SK-N-SH (cell line): ENCODE measurements at regions of chr10 and their contacts with region 1.

Region 1: DNA sequence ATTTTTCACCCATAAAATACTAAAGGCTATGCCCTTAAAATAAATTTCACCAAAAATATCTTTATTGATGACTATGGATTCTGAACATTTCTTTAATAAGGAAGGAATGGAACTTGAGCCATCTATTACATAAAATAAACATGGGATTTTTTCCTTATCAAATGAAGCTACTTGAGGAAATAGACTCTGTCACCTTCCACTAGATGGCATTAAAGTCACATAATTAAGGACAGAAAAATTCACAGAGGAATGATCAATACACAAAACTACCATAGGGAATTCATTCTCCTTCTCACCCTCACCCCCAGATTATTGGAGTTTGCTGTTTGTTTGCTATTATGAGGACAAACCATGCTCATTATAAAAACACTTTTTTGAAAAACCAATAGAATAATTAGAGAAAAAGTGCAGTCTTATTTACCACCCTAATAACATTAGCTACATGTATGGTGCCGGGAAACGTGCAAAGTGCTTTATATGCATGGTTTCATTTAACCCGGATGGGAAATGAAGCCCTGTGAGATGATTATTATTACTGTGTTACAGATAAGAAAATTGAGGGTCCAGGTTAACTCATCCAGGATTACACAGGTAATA is 21.1 kb upstream of the FOXI2 start:
- DNase-seq: peak; percentile 32
- H3K4me3 ChIP-seq: no peak overlapping the region; a peak in 1 of 4 replicates
- H3K27ac ChIP-seq: no peak overlapping the region
- H3K4me1 ChIP-seq: no peaks in the 10 kb centered on the region
- H3K27me3 ChIP-seq: no peaks in the 10 kb centered on the region
- CTCF ChIP-seq: peak; percentile 51
- EP300 ChIP-seq: no peak
- RAD21 ChIP-seq: peak; percentile 65

Region 2: DNA sequence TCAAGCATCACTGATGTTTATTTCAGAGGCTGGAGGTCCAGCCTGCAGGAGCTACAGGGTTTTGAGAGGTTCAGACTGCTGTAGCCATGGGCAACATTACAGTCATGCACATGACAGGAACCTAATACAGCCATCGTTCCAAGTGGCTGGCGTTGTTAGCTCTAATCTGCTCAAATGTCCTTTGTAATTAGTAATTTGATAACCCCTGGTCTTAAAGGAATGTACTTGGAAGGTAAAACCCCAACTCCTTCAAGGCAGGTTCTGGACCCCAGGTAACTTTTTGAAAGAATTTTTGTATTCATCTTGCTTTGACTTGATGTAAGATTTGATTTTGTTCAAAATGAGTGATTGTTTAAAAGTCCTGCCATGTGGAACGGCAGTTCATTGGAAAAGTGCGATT is 13.6 kb before region 1 on chr10:
- CTCF ChIA-PET with region 1: interaction called, 11 read pairs
- POLR2A ChIA-PET with region 1: no interaction called
- DNase-seq: no peak
- H3K4me3 ChIP-seq: no peak overlapping the region
- H3K27ac ChIP-seq: no peak overlapping the region
- H3K4me1 ChIP-seq: no peaks in the 10 kb centered on the region
- H3K27me3 ChIP-seq: no peaks in the 10 kb centered on the region
- CTCF ChIP-seq: no peak
- EP300 ChIP-seq: no peak
- RAD21 ChIP-seq: no peak

Region 3: GRCh38 chr10:127774766-127775559 is 59.1 kb after region 1 on chr10:
- CTCF ChIA-PET with region 1: interaction called, 12 read pairs
- POLR2A ChIA-PET with region 1: no interaction called
- DNase-seq: no peak
- H3K4me3 ChIP-seq: no peak overlapping the region
- H3K27ac ChIP-seq: no peak overlapping the region
- H3K4me1 ChIP-seq: no peaks in the 10 kb centered on the region
- H3K27me3 ChIP-seq: no peaks in the 10 kb centered on the region
- CTCF ChIP-seq: no peak
- EP300 ChIP-seq: no peak
- RAD21 ChIP-seq: no peak